ENCODE measurements at regions of chr5 and their contacts with region 1.

Region 1: GRCh38 chr5:60960591-60960990 is 15.6 kb downstream of the NDUFAF2 start:
- DNase-seq: peak in 3 of 14 experiments; percentile 39 to 53 (median 47)
- ATAC-seq: peak; percentile 52
- H3K4me3 ChIP-seq: no peak overlapping the region
- H3K4me3 Mint-ChIP-seq: no peak overlapping the region
- H3K27ac ChIP-seq: no peak overlapping the region
- H3K27ac Mint-ChIP-seq: no peak overlapping the region
- H3K4me1 ChIP-seq: no peaks in the 10 kb centered on the region
- H3K4me1 Mint-ChIP-seq: peaks cover 20% of the 10 kb centered on the region
- H3K27me3 ChIP-seq: no peaks in the 10 kb centered on the region
- H3K27me3 Mint-ChIP-seq: no peaks in the 10 kb centered on the region
- CTCF ChIP-seq: peak; percentile 77

Region 2: GRCh38 chr5:60494635-60495034 is 466.0 kb before region 1 on chr5:
- CTCF ChIA-PET with region 1: no interaction called
- POLR2A ChIA-PET with region 1: no interaction called
- intact Hi-C with region 1: no loop called
- DNase-seq: no peak
- ATAC-seq: no peak
- H3K4me3 ChIP-seq: no peak overlapping the region
- H3K4me3 Mint-ChIP-seq: no peak overlapping the region
- H3K27ac ChIP-seq: no peak overlapping the region
- H3K27ac Mint-ChIP-seq: no peak overlapping the region
- H3K4me1 ChIP-seq: no peaks in the 10 kb centered on the region
- H3K4me1 Mint-ChIP-seq: no peaks in the 10 kb centered on the region
- H3K27me3 ChIP-seq: no peaks in the 10 kb centered on the region
- H3K27me3 Mint-ChIP-seq: no peaks in the 10 kb centered on the region
- CTCF ChIP-seq: no peak

Region 3: GRCh38 chr5:60677844-60678664 is 282.5 kb before region 1 on chr5:
- CTCF ChIA-PET with region 1: no interaction called
- POLR2A ChIA-PET with region 1: no interaction called
- intact Hi-C with region 1: loop called (anchors 5 kb)
- DNase-seq: peak in 3 of 14 experiments; percentile 47 to 52 (median 48)
- ATAC-seq: no peak
- H3K4me3 ChIP-seq: no peak overlapping the region
- H3K4me3 Mint-ChIP-seq: no peak overlapping the region
- H3K27ac ChIP-seq: no peak overlapping the region
- H3K27ac Mint-ChIP-seq: no peak overlapping the region
- H3K4me1 ChIP-seq: no peaks in the 10 kb centered on the region
- H3K4me1 Mint-ChIP-seq: peaks cover 4% of the 10 kb centered on the region
- H3K27me3 ChIP-seq: no peaks in the 10 kb centered on the region
- H3K27me3 Mint-ChIP-seq: no peaks in the 10 kb centered on the region
- CTCF ChIP-seq: peak; percentile 72

Region 4: GRCh38 chr5:61139100-61139873 is 178.7 kb after region 1 on chr5:
- CTCF ChIA-PET with region 1: no interaction called
- POLR2A ChIA-PET with region 1: no interaction called
- intact Hi-C with region 1: no loop called
- DNase-seq: peak in 1 of 14 experiments; percentile 5
- ATAC-seq: no peak
- H3K4me3 ChIP-seq: no peak overlapping the region
- H3K4me3 Mint-ChIP-seq: no peak overlapping the region
- H3K27ac ChIP-seq: no peak overlapping the region
- H3K27ac Mint-ChIP-seq: no peak overlapping the region
- H3K4me1 ChIP-seq: no peaks in the 10 kb centered on the region
- H3K4me1 Mint-ChIP-seq: no peaks in the 10 kb centered on the region
- H3K27me3 ChIP-seq: no peaks in the 10 kb centered on the region
- H3K27me3 Mint-ChIP-seq: no peaks in the 10 kb centered on the region
- CTCF ChIP-seq: no peak

Region 5: GRCh38 chr5:61256474-61256873 is 295.9 kb after region 1 on chr5:
- CTCF ChIA-PET with region 1: no interaction called
- POLR2A ChIA-PET with region 1: no interaction called
- intact Hi-C with region 1: no loop called
- DNase-seq: no peak
- ATAC-seq: no peak
- H3K4me3 ChIP-seq: no peak overlapping the region
- H3K4me3 Mint-ChIP-seq: no peak overlapping the region
- H3K27ac ChIP-seq: no peak overlapping the region
- H3K27ac Mint-ChIP-seq: no peak overlapping the region
- H3K4me1 ChIP-seq: no peaks in the 10 kb centered on the region
- H3K4me1 Mint-ChIP-seq: no peaks in the 10 kb centered on the region
- H3K27me3 ChIP-seq: no peaks in the 10 kb centered on the region
- H3K27me3 Mint-ChIP-seq: peaks cover 29% of the 10 kb centered on the region
- CTCF ChIP-seq: no peak

Region 6: GRCh38 chr5:61416010-61416409 is 455.4 kb after region 1 on chr5:
- CTCF ChIA-PET with region 1: no interaction called
- POLR2A ChIA-PET with region 1: no interaction called
- intact Hi-C with region 1: no loop called
- DNase-seq: no peak
- ATAC-seq: no peak
- H3K4me3 ChIP-seq: no peak overlapping the region
- H3K4me3 Mint-ChIP-seq: no peak overlapping the region
- H3K27ac ChIP-seq: no peak overlapping the region
- H3K27ac Mint-ChIP-seq: no peak overlapping the region
- H3K4me1 ChIP-seq: no peaks in the 10 kb centered on the region
- H3K4me1 Mint-ChIP-seq: peaks cover 48% of the 10 kb centered on the region
- H3K27me3 ChIP-seq: no peaks in the 10 kb centered on the region
- H3K27me3 Mint-ChIP-seq: no peaks in the 10 kb centered on the region
- CTCF ChIP-seq: no peak

Region 7: DNA sequence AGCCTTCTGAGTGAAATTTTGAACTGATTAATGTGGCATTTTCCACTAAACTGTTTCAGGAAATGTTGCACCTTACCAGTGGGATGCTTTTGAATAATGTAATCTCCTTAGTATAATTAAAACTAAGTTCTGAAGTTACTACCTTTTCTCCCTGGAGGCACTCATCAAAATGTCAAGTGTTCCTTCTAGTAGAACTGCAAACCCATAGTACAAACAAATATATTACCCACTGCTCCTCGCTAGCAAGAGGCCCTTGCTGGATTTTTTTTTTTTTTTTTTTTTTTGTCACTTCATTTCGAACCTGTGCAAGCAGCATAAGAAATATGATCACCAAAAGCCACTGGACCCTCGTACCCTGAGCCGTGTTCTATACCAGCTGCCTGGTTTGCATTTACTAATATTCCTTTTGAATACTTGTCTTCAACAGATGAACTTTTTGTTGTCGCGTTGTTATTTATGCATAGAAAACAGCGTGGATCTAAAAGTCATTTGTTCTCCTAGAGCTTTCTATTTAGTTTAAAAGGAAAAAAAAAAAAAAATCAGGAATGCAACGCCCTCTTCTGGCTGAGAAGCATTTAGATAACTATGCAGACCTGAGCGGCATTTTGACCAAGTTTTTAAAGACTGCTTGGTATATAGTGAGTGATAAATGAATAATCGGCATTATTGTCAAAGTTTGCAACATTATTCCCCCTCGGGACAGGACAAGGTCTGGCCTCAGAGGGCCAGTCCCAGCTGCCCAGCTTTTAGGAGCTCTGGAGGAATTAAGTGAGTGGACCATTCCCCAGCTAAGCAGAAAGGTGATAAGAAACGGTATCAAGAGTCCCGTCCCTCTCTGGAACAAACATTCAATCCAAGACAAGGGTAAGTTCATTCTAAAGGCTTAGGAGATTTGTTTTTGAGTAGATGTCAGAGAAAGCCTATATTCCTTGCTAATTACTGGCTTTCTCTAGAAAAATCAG is 1183.0 kb after region 1 on chr5:
- CTCF ChIA-PET with region 1: no interaction called
- POLR2A ChIA-PET with region 1: no interaction called
- intact Hi-C with region 1: loop called in 1 of 2 experiments (anchors 10 kb)
- DNase-seq: no peak
- ATAC-seq: no peak
- H3K4me3 ChIP-seq: no peak overlapping the region
- H3K4me3 Mint-ChIP-seq: no peak overlapping the region
- H3K27ac ChIP-seq: no peak overlapping the region
- H3K27ac Mint-ChIP-seq: no peak overlapping the region
- H3K4me1 ChIP-seq: no peaks in the 10 kb centered on the region
- H3K4me1 Mint-ChIP-seq: no peaks in the 10 kb centered on the region
- H3K27me3 ChIP-seq: peaks cover 3 to 14% of the 10 kb centered on the region in 2 experiments
- H3K27me3 Mint-ChIP-seq: peaks cover 46% of the 10 kb centered on the region
- CTCF ChIP-seq: no peak